ENCODE measurements at regions of chr5 and their contacts with region 1.

Region 1: GRCh38 chr5:13994621-13995253 is 50.2 kb upstream of the DNAH5 start:
- DNase-seq: no peak
- H3K4me3 ChIP-seq: no peak overlapping the region
- H3K27ac ChIP-seq: no peak overlapping the region
- H3K4me1 ChIP-seq: no peaks in the 10 kb centered on the region
- H3K27me3 ChIP-seq: peaks cover 9% of the 10 kb centered on the region
- CTCF ChIP-seq: no peak

Region 2: GRCh38 chr5:14097998-14098471 is 103.3 kb after region 1 on chr5:
- intact Hi-C with region 1: loop called (anchors 10 kb)
- DNase-seq: no peak
- H3K4me3 ChIP-seq: no peak overlapping the region
- H3K27ac ChIP-seq: no peak overlapping the region
- H3K4me1 ChIP-seq: no peaks in the 10 kb centered on the region
- H3K27me3 ChIP-seq: no peaks in the 10 kb centered on the region
- CTCF ChIP-seq: no peak

Region 3: GRCh38 chr5:14190194-14191164 is 195.7 kb after region 1 on chr5:
- intact Hi-C with region 1: no loop called
- DNase-seq: no peak
- H3K4me3 ChIP-seq: peak overlapping the region; percentile 37
- H3K27ac ChIP-seq: peak overlapping the region; percentile 72
- H3K4me1 ChIP-seq: peaks cover 96% of the 10 kb centered on the region
- H3K27me3 ChIP-seq: no peaks in the 10 kb centered on the region
- CTCF ChIP-seq: no peak